ENCODE measurements at regions of chr7 and their contacts with region 1.

Region 1: GRCh38 chr7:7968543-7969305 is at the start of gene GLCCI1:
- DNase-seq: peak; percentile 98
- H3K4me3 ChIP-seq: peak within 1 kb of the TSS; percentile 61 to 80 (median 70)
- H3K27ac ChIP-seq: no peak within 1 kb of the TSS
- H3K4me1 ChIP-seq: peaks cover 10% of the 10 kb centered on the region
- H3K27me3 ChIP-seq: no peaks in the 10 kb centered on the region
- CTCF ChIP-seq: no peak
- POLR2A ChIP-seq: peak; percentile 60
- total RNA-seq, gene GLCCI1: 5.1 and 5.6 TPM in 2 replicates

Region 2: GRCh38 chr7:7566651-7567611 is 401.8 kb before region 1 on chr7 and contains the start of gene MIOS:
- CTCF ChIA-PET with region 1: no interaction called
- POLR2A ChIA-PET with region 1: no interaction called
- dilution Hi-C with region 1: no loop called
- intact Hi-C with region 1: loop called (anchors 1 kb)
- DNase-seq: peak; percentile 75
- H3K4me3 ChIP-seq: peak within 1 kb of the TSS; percentile 86 to 95 (median 91)
- H3K27ac ChIP-seq: peak within 1 kb of the TSS; percentile 85
- H3K4me1 ChIP-seq: peaks cover 10% of the 10 kb centered on the region
- H3K27me3 ChIP-seq: no peaks in the 10 kb centered on the region
- CTCF ChIP-seq: no peak
- POLR2A ChIP-seq: peak; percentile 72
- total RNA-seq, gene MIOS: 16.0 and 16.8 TPM in 2 replicates

Region 3: GRCh38 chr7:7640221-7641128 is 328.2 kb before region 1 on chr7 and contains the start of gene UMAD1:
- CTCF ChIA-PET with region 1: no interaction called
- POLR2A ChIA-PET with region 1: interaction called, 4 read pairs
- dilution Hi-C with region 1: no loop called
- intact Hi-C with region 1: loop called (anchors 1 kb)
- DNase-seq: peak; percentile 98
- H3K4me3 ChIP-seq: peak within 1 kb of the TSS; percentile 66 to 93 (median 79)
- H3K27ac ChIP-seq: peak within 1 kb of the TSS; percentile 21
- H3K4me1 ChIP-seq: peaks cover 8% of the 10 kb centered on the region
- H3K27me3 ChIP-seq: no peaks in the 10 kb centered on the region
- CTCF ChIP-seq: no peak
- POLR2A ChIP-seq: peak; percentile 78
- total RNA-seq, gene UMAD1: 6.1 and 6.6 TPM in 2 replicates

Region 4: GRCh38 chr7:7696458-7697119 is 272.1 kb before region 1 on chr7:
- CTCF ChIA-PET with region 1: no interaction called
- POLR2A ChIA-PET with region 1: interaction called, 3 read pairs
- dilution Hi-C with region 1: no loop called
- intact Hi-C with region 1: loop called (anchors 5 kb)
- DNase-seq: peak; percentile 23
- H3K4me3 ChIP-seq: no peak overlapping the region
- H3K27ac ChIP-seq: no peak overlapping the region
- H3K4me1 ChIP-seq: peaks cover 6% of the 10 kb centered on the region
- H3K27me3 ChIP-seq: no peaks in the 10 kb centered on the region
- CTCF ChIP-seq: no peak
- POLR2A ChIP-seq: no peak

Region 5: GRCh38 chr7:7861211-7861633 is 107.5 kb before region 1 on chr7:
- CTCF ChIA-PET with region 1: no interaction called
- POLR2A ChIA-PET with region 1: no interaction called
- dilution Hi-C with region 1: no loop called
- intact Hi-C with region 1: loop called (anchors 1 kb)
- DNase-seq: peak; percentile 96
- H3K4me3 ChIP-seq: no peak overlapping the region
- H3K27ac ChIP-seq: no peak overlapping the region
- H3K4me1 ChIP-seq: peaks cover 21% of the 10 kb centered on the region
- H3K27me3 ChIP-seq: no peaks in the 10 kb centered on the region
- CTCF ChIP-seq: no peak
- POLR2A ChIP-seq: peak; percentile 50

Region 6: GRCh38 chr7:7956531-7957128 is 12.1 kb before region 1 on chr7:
- CTCF ChIA-PET with region 1: interaction called, 23 read pairs
- POLR2A ChIA-PET with region 1: no interaction called
- dilution Hi-C with region 1: no loop called
- intact Hi-C with region 1: no loop called
- DNase-seq: peak; percentile 13
- H3K4me3 ChIP-seq: no peak overlapping the region
- H3K27ac ChIP-seq: no peak overlapping the region
- H3K4me1 ChIP-seq: no peaks in the 10 kb centered on the region
- H3K27me3 ChIP-seq: no peaks in the 10 kb centered on the region
- CTCF ChIP-seq: no peak
- POLR2A ChIP-seq: no peak

Region 7: GRCh38 chr7:8035647-8036518 is 67.2 kb after region 1 on chr7:
- CTCF ChIA-PET with region 1: interaction called, 4 read pairs
- POLR2A ChIA-PET with region 1: no interaction called
- dilution Hi-C with region 1: no loop called
- intact Hi-C with region 1: loop called (anchors 2 kb)
- DNase-seq: peak; percentile 46
- H3K4me3 ChIP-seq: no peak overlapping the region
- H3K27ac ChIP-seq: no peak overlapping the region
- H3K4me1 ChIP-seq: no peaks in the 10 kb centered on the region
- H3K27me3 ChIP-seq: no peaks in the 10 kb centered on the region
- CTCF ChIP-seq: peak; percentile 33 to 46
- POLR2A ChIP-seq: no peak

Region 8: GRCh38 chr7:8051373-8051772 is 82.6 kb after region 1 on chr7:
- CTCF ChIA-PET with region 1: no interaction called
- POLR2A ChIA-PET with region 1: no interaction called
- dilution Hi-C with region 1: no loop called
- intact Hi-C with region 1: no loop called
- DNase-seq: no peak
- H3K4me3 ChIP-seq: no peak overlapping the region
- H3K27ac ChIP-seq: no peak overlapping the region
- H3K4me1 ChIP-seq: no peaks in the 10 kb centered on the region
- H3K27me3 ChIP-seq: no peaks in the 10 kb centered on the region
- CTCF ChIP-seq: no peak
- POLR2A ChIP-seq: no peak